ENCODE measurements at regions of chr6 and their contacts with region 1.

Region 1: GRCh38 chr6:53718597-53719460 is 53.3 kb upstream of the KLHL31 start:
- DNase-seq: peak; percentile 41
- H3K4me3 ChIP-seq: no peak overlapping the region
- H3K27ac ChIP-seq: peak overlapping the region in 3 of 4 donors; percentile 1 to 18 (median 5)
- H3K4me1 ChIP-seq: peaks cover 0 to 18% (median 0%) of the 10 kb centered on the region in 4 donors
- H3K27me3 ChIP-seq: no peaks in the 10 kb centered on the region
- CTCF ChIP-seq: peak; percentile 65 to 87 (median 76)
- EP300 ChIP-seq: no peak
- POLR2A ChIP-seq: no peak

Region 2: GRCh38 chr6:53179961-53180651 is 538.7 kb before region 1 on chr6:
- in situ Hi-C with region 1: loop called in 1 of 4 experiments (anchors 25 kb)
- intact Hi-C with region 1: no loop called
- DNase-seq: peak; percentile 59
- H3K4me3 ChIP-seq: no peak overlapping the region
- H3K27ac ChIP-seq: no peak overlapping the region
- H3K4me1 ChIP-seq: peaks cover 0 to 4% (median 0%) of the 10 kb centered on the region in 4 donors
- H3K27me3 ChIP-seq: no peaks in the 10 kb centered on the region
- CTCF ChIP-seq: no peak
- EP300 ChIP-seq: no peak
- POLR2A ChIP-seq: no peak